RWPE1 (cell line): ENCODE measurements at regions of chr14 and their contacts with region 1.

Region 1: DNA sequence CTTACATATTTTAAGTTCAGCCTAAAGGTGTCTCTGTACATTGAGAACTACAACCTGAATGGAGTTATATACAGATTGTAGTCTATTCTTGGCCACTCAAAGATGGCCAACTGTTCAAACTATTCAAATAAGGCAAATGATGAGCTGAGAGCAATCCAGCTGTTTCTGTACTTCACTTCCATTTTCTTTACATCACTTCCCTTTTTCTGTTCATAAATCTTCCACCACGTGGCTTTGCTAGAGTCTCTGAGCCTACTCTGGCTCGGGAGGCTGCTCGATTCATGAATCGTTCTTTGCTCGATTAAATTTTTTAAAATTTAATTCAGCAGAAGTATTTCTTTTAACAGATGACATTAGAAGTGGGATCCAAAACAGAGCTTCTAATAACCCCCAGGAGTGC is 879.7 kb downstream of the GALC start:
- DNase-seq: no peak
- H3K27ac ChIP-seq: no peak overlapping the region
- CTCF ChIP-seq: no peak

Region 2: GRCh38 chr14:85250414-85251189 is 1862.7 kb before region 1 on chr14:
- CTCF ChIA-PET with region 1: interaction called, 11 read pairs
- POLR2A ChIA-PET with region 1: no interaction called
- DNase-seq: no peak
- H3K27ac ChIP-seq: no peak overlapping the region
- CTCF ChIP-seq: no peak

Region 3: GRCh38 chr14:87207756-87208155 is 94.5 kb after region 1 on chr14:
- CTCF ChIA-PET with region 1: interaction called, 10 read pairs
- POLR2A ChIA-PET with region 1: no interaction called
- DNase-seq: no peak
- H3K27ac ChIP-seq: no peak overlapping the region
- CTCF ChIP-seq: no peak